ENCODE measurements at regions of chr2 and their contacts with region 1.

Region 1: DNA sequence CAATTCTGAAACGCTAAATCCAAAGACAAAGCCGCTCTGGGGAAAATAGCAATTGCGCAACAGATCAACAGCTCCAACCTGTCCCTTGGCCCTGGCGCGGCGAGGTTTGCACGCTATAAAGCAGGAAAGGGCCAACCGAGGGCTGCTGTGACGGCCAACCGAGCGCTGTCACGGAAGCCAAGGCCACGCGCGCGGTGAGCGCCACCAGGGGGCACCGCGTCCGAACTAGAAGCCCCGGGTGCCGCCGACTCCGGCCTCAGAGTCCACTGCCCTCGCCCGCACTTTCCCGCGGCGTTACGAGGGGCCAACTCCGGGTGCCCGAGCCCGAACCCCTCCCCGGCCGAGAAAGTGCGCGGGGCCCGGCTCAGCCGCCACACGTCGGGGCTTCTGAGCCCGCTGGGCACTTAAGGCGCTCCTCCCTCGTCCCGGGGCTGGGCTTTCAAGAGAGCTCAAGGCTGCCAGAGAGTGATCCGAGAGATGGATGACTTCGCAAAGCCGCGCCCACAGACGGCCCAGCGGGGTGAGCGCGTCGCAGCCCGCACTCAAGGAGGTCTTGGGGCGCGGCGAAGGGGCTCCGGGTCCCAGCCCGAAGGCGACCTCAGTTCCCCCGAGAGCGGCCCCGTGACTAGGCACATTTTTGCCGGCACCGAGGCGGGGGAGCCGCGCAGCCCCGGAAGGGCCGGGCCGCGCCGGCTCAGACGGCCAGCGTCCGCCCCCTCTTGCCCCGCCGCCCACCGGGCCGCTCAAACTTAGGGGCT is 897 bp downstream of the NFE2L2 start:
- DNase-seq: peak; percentile 92
- H3K4me3 Mint-ChIP-seq: peak overlapping the region; percentile 93
- H3K27ac Mint-ChIP-seq: peak overlapping the region; percentile 98
- H3K4me1 Mint-ChIP-seq: peaks cover 68% of the 10 kb centered on the region
- H3K27me3 Mint-ChIP-seq: no peaks in the 10 kb centered on the region

Region 2: DNA sequence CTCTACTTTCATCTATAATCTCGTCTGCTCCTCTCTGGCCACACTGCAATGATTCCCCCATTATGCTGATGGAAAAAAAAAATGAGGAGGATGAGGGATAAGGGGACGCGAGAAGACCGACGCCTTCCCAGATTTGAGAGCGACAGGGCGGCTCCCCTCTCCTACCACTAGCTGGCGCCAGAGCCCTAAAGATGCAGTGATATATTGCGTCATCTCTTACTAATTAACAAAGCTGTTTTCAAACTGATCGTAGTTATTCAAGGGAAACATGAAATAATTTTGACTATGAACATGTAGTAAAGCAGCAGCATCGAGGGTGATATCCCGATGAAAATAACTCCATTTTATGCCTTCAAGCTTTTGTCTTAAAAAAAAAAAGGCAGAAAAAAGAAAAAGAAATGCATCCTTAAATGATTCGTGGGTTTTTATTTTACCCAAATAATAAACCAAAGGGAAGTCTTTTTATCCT is 99.0 kb before region 1 on chr2:
- intact Hi-C with region 1: loop called (anchors 1 kb)
- DNase-seq: peak; percentile 63
- H3K4me3 Mint-ChIP-seq: no peak overlapping the region
- H3K27ac Mint-ChIP-seq: no peak overlapping the region
- H3K4me1 Mint-ChIP-seq: peaks cover 25% of the 10 kb centered on the region
- H3K27me3 Mint-ChIP-seq: peaks cover 3% of the 10 kb centered on the region

Region 3: GRCh38 chr2:177229448-177230242 is 34.0 kb before region 1 on chr2:
- intact Hi-C with region 1: loop called (anchors 1 kb)
- DNase-seq: no peak
- H3K4me3 Mint-ChIP-seq: no peak overlapping the region
- H3K27ac Mint-ChIP-seq: peak overlapping the region; percentile 74
- H3K4me1 Mint-ChIP-seq: peaks cover 45% of the 10 kb centered on the region
- H3K27me3 Mint-ChIP-seq: no peaks in the 10 kb centered on the region

Region 4: GRCh38 chr2:177289824-177290628 is 26.4 kb after region 1 on chr2:
- intact Hi-C with region 1: loop called (anchors 1 kb)
- DNase-seq: peak; percentile 5
- H3K4me3 Mint-ChIP-seq: peak overlapping the region; percentile 63
- H3K27ac Mint-ChIP-seq: peak overlapping the region; percentile 85
- H3K4me1 Mint-ChIP-seq: peaks cover 75% of the 10 kb centered on the region
- H3K27me3 Mint-ChIP-seq: peaks cover 2% of the 10 kb centered on the region

Region 5: DNA sequence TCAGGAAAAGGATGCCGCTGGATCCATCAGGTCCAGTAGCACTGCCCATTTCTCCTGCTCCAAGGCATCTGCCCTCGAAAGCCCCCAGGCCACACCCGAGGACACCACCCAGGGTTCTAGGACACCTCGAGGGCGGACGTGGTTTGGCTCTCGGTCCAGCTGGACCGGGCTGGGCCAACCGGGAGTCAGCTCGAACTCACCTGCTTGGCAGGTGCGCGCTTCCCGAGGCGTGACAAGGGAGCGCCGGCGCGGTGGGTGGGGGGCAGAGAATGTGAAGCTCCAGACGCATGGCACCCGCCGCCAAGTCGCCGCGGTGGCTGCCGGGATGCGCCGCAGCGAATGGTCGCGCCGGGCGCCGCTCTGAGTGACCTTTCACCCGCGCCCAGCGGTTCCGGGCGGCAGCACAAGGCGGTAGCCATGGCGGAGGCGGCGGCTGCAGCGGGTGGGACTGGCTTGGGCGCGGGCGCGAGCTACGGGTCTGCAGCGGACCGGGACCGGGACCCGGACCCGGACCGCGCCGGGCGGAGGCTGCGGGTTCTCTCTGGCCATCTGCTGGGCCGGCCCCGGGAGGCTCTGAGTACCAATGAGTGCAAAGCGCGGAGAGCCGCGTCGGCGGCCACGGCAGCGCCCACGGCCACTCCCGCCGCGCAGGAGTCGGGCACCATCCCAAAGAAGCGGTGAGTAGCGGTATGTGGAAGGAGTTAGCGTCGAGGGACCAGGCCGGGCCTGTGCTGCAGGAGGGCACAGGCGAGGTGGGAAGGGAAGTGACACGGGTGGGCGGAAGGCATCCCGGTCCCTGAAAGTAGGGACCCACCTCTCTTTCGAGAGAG is 129.0 kb after region 1 on chr2 and contains the start of gene AGPS:
- intact Hi-C with region 1: loop called (anchors 2 kb)
- DNase-seq: peak; percentile 80
- H3K4me3 Mint-ChIP-seq: peak within 1 kb of the TSS; percentile 90
- H3K27ac Mint-ChIP-seq: peak within 1 kb of the TSS; percentile 92
- H3K4me1 Mint-ChIP-seq: peaks cover 58% of the 10 kb centered on the region
- H3K27me3 Mint-ChIP-seq: no peaks in the 10 kb centered on the region
- total RNA-seq, gene AGPS: 70.1 and 71.8 TPM in 2 replicates

Region 6: DNA sequence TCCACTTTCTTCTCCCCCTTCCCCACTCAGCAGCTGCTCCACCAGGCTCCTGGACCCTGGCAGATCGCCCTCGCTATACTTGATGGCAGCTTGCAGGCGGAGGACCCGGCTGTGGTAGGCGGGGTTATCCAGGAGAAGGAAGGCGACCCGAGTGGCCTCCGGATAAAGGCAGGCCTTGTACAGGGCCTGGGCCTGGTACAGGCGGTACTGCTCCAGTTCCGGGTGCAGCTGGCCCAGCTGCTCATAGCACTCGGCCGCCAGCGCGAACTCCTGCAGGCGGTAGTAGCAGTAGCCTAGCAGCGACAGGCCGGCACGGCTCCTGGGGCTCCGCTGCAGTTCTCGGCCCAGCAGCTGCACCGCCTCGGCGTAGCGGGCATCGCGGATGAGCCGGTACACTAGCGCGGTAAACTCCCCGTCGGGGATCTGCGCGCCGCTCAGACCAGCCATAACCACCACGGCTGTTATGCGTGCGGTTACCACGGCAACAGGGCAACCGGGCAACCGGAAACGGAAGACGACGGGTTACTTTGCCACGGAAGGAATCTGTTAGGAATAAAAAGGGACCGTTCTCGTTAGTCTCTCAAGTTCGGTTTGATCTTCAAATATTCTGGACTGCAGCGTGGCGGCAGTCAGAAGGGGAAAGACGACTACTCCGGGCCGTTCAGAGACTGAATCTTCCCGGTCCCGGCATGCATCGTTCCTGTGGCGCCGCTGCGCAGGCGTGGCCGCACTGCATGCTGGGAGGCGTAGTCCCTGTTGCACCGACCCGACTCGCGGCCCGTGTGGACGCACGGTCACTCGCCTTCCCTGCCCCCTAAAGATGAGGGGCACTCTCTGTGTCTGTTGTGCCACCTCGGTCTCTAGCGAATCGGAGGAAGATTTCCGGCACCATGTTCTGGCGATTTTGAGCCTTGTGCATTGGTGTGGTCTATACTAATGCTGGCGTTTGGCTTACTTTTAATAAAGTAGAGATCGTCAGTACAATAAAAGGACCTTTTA is 354.9 kb after region 1 on chr2:
- intact Hi-C with region 1: loop called (anchors 1 kb)
- DNase-seq: peak; percentile 91
- H3K4me3 Mint-ChIP-seq: peak overlapping the region; percentile 94
- H3K27ac Mint-ChIP-seq: peak overlapping the region; percentile 99
- H3K4me1 Mint-ChIP-seq: peaks cover 13% of the 10 kb centered on the region
- H3K27me3 Mint-ChIP-seq: peaks cover 4% of the 10 kb centered on the region

Measured in activated T-helper 1 cell treated with anti-CD3 and anti-CD28 coated beads, Interleukin-12 subunit alpha, Interleukin-12 subunit beta, Interleukin-2, Interleukin-4 antibody, amounts not matched to agents 30 ng/mL and 10 ng/mL and 1 ng/mL, durations not matched to agents 14 hours and 24 hours and 36 hours (primary cell).